IMR-90 (cell line): ENCODE measurements at regions of chr3 and their contacts with region 1.

Region 1: DNA sequence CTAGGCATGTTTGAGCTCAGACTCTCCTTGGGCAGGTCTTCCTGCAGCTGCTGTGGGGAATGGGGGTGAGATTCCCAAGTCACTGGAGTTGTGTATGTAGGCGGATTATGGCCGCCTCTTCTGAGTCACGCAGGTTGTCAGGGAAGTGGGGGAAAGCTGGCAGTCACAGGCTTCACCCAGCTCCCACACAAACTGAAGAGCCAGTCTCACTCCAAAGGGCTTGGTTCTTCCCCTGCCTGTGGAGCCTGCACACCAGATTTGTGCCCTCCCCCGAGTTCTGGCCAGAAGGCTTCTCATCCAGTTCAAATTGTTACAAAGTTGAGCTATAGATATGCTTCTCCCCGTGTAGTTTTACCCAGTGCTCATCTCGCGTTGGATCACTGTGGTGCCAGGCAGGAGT is 53.5 kb downstream of the CPNE4 start:
- DNase-seq: no peak
- ATAC-seq: no peak
- H3K4me3 ChIP-seq: no peak overlapping the region
- H3K27ac ChIP-seq: no peak overlapping the region
- H3K4me1 ChIP-seq: no peaks in the 10 kb centered on the region
- H3K27me3 ChIP-seq: no peaks in the 10 kb centered on the region
- CTCF ChIP-seq: no peak
- POLR2A ChIP-seq: no peak
- RAD21 ChIP-seq: no peak

Region 2: DNA sequence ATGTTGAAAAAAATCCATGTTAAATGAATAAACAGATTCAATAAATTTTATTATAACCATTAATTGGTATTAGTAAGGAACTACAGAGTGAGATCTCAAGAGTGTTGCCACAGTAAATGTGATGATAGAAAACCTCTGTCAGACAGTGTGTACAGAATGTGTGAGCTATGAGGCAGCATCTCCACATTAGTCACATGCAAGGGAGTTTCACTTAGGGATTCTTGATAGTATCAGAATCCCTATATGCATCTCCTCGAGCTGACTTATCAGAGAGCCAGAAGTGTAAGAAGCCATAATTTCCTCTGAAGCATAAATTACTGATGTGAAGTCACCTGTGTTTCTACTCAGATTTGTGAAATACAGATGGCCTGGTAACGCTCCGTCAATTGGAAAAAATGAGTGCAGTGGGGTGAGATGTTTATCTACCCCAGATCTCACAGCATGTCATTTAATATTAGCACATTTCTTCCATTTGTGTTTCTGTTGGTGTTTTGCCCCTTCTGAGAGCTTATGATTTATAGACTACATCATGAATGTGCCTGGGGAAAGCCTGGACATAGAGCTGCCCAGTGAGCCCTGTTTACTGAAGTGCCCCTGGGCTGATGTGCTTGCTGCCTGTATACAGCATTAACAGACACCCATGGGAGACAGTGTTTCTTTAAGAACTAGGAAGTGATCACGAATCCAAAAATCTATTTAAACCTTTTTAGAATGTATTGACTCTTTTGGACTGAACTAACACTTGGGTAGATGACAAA is 208.9 kb before region 1 on chr3:
- CTCF ChIA-PET with region 1: no interaction called
- POLR2A ChIA-PET with region 1: no interaction called
- dilution Hi-C with region 1: no loop called
- in situ Hi-C with region 1: no loop called
- intact Hi-C with region 1: no loop called
- DNase-seq: no peak
- ATAC-seq: no peak
- H3K4me3 ChIP-seq: no peak overlapping the region
- H3K27ac ChIP-seq: no peak overlapping the region
- H3K4me1 ChIP-seq: no peaks in the 10 kb centered on the region
- H3K27me3 ChIP-seq: no peaks in the 10 kb centered on the region
- CTCF ChIP-seq: no peak
- POLR2A ChIP-seq: no peak
- RAD21 ChIP-seq: no peak

Region 3: GRCh38 chr3:131948806-131949205 is 32.5 kb before region 1 on chr3:
- CTCF ChIA-PET with region 1: no interaction called
- POLR2A ChIA-PET with region 1: no interaction called
- dilution Hi-C with region 1: no loop called
- in situ Hi-C with region 1: no loop called
- intact Hi-C with region 1: loop called (anchors 1 kb)
- DNase-seq: no peak
- ATAC-seq: no peak
- H3K4me3 ChIP-seq: no peak overlapping the region
- H3K27ac ChIP-seq: no peak overlapping the region
- H3K4me1 ChIP-seq: no peaks in the 10 kb centered on the region
- H3K27me3 ChIP-seq: no peaks in the 10 kb centered on the region
- CTCF ChIP-seq: no peak
- POLR2A ChIP-seq: no peak
- RAD21 ChIP-seq: no peak